ENCODE measurements at regions of chr9 and their contacts with region 1.

Region 1: DNA sequence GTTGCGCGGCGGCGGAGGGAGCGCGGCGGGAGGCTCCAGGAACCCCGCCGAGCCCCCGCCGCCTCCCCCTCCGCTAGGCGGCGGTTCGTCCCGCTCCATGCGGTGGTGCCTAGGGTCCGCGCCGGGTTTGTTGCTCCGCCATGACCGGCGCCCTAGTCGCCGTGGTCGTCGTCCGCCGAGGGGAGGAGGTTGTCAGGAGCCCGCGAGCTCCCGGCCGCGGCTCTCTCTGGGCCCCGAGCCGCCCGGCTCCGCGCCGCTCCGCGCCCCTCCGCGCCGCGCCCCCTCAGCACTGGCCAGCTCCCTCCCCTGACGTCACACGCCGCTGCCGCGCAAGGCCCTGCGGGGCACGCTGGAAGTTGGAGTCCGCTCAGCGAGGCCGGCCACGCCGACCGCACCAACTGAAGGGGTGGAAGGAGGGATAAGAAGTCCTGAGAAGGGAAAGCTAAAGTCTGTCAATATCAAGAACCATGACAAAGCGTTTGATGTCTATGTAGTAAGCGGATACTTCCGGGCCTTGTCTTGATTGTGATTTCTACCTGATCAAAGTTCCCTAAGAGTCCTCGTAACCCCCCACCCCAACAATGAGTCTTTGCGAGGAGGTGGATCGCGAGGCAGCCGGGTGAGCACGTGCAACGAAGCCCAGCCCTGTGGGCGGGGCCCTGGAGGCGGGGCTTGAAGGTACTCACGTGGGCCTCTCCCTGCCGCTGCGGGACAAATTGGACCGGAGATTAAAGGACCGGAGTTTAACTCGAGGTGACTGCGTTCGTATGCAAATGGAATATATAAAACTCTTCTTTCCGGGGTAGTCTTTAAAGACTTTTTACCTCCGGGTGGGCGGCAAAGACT is at the start of gene NR6A1:
- DNase-seq: peak; percentile 92 to 98 (median 96)

Region 2: GRCh38 chr9:124852829-124853531 is 81.7 kb after region 1 on chr9 and contains the start of gene WDR38:
- intact Hi-C with region 1: loop called (anchors 2 kb)
- DNase-seq: peak in 41 of 42 donors; percentile 37 to 88 (median 72)

Region 3: DNA sequence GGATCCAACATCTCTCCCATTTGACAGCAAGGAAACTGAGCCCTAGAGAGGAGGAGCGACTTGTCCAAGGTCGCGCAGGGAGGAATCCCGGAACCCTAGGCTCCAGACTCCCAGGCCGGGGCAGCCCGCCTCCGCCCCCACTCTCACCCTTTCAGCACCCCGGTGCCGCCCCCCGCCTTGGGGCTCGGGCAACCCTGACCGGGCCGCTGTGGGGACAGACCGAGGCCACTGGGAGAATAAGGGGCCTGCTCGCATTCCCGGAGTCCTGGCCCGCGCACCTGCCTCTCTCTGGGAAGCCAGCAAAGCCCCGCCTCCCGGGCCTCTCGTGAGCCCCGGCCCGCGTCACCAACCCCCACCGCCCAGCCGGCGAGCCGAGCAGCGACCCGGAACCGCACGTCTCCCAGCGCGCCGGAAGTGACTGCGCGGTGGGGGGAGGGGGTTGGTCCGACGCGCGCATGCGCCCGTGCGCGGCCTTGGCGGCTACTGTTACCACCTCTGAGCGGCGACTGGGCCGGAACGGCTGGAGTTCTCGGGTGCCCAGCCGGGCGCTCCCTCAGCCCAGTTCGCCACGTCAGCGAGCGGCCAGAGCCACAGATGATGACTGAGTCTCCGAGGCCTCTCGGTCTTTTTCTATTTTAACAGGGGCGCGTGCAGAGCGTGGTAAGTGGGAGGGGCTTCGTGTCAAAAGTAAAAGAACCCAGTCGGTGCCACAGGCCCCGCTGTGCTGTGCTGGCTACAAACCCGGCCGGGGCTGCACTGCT is 169.6 kb after region 1 on chr9 and contains the start of gene GOLGA1:
- intact Hi-C with region 1: loop called (anchors 2 kb)
- DNase-seq: peak; percentile 84 to 97 (median 93)

Region 4: DNA sequence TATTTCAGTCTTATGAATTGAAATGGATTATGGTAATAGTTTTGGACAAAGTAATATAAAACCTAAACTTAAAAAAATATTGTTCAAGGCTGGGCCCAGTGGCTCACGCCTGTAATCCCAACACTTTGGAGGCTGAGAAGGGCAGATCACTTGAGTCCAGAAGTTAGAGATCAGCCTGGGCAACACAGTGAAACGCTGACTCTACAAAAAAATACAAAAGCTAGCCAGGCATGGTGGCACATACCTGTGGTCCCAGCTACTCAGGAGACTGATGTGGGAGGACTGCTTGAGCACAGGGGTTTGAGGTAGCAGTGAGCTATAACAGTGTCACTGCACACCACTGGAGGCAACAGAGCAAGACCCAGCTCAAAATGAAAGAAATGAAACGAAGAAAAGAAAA is 290.1 kb after region 1 on chr9:
- intact Hi-C with region 1: no loop called
- DNase-seq: no peak

Region 5: DNA sequence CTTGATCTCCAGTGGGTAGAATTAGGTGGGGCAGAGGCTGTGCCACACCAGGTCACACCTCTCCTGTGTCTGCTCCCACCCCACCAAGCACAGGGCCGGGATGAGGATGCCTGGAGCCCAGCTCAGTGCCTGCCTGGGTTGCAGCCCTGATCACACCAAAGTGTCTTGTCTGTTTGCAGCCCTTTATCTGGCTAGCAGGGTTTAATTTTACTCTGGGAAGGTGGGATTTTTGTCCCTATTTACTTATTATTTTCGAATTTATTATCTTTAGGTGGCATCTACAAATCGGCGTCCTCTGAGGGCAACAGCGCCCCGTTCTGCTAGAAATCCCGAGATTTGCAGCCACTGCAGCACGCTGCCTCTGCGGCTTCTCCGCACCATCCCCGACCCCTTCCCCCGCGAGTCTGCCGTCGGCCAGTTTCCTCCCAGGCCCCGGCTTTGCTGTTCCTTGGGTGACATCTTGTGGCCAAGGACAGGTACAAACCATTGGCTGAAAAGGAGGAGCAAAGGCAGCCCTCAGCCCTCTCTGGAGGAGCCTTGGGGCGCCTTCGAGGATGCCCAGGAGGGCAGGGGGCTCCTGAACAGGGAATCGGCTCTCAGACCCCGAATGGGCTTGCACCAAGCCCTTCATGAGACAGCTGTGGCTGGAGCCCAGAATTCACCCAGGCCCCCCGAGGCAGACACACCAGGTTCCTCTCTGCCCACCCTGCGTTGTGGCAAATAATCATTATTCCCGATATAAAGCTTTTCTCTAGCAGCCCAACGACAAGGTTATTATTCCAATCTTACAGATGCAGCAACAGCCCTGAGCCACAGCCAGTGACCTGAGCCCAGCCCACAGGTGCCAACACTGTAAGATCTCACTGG is 603.4 kb after region 1 on chr9:
- intact Hi-C with region 1: loop called (anchors 5 kb)
- DNase-seq: peak; percentile 52 to 90 (median 76)

Measured in head of caudate nucleus (tissue), 42 donors.